Activated CD4-positive, alpha-beta memory T cell treated with anti-CD3 and anti-CD28 coated beads, Interleukin-2, amount 10 ng/mL, durations not matched to agents 7 days and 5 days (primary cell): ENCODE measurements at regions of chr13 and their contacts with region 1.

Region 1: DNA sequence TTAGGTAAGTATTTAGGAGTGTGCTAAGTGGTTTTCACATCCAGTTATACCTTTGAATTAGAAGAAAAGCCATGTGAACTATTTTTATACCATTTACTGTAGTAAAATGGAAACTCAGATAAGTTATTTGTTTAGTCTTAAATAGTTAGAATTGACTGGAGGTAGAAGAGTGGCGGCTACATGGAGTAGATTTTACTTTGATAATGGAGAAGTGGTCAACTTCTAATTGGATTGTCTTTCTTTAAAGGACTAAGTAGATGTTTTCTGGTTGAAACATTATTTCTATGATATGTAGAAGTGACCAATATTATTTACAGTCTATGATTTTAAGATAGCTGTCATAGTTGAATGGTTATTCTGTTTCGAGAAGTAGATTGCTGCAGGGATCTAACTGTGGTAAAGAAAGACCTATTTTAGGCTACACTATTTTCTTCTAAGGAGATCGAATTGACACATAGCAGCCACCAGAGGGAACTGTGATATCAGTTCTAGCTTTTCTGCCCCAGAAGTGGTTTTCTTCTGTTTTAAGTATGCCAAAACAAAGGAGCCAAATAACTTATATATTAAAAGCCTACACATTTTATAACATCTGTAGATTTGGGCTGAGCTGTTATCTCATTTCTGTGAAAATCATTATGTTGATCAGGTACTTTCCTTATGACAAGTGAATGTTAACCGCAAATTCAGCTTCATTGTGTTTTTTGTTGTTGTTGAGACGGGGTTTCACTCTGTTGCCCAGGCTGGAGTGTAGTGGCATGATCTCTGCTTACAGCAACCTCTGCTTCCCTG is 26.1 kb downstream of the ZMYM2 start:
- DNase-seq: peak; percentile 18
- H3K4me3 Mint-ChIP-seq: no peak overlapping the region
- H3K27ac Mint-ChIP-seq: peak overlapping the region; percentile 66
- H3K4me1 Mint-ChIP-seq: peaks cover 35% of the 10 kb centered on the region
- H3K27me3 Mint-ChIP-seq: no peaks in the 10 kb centered on the region

Region 2: DNA sequence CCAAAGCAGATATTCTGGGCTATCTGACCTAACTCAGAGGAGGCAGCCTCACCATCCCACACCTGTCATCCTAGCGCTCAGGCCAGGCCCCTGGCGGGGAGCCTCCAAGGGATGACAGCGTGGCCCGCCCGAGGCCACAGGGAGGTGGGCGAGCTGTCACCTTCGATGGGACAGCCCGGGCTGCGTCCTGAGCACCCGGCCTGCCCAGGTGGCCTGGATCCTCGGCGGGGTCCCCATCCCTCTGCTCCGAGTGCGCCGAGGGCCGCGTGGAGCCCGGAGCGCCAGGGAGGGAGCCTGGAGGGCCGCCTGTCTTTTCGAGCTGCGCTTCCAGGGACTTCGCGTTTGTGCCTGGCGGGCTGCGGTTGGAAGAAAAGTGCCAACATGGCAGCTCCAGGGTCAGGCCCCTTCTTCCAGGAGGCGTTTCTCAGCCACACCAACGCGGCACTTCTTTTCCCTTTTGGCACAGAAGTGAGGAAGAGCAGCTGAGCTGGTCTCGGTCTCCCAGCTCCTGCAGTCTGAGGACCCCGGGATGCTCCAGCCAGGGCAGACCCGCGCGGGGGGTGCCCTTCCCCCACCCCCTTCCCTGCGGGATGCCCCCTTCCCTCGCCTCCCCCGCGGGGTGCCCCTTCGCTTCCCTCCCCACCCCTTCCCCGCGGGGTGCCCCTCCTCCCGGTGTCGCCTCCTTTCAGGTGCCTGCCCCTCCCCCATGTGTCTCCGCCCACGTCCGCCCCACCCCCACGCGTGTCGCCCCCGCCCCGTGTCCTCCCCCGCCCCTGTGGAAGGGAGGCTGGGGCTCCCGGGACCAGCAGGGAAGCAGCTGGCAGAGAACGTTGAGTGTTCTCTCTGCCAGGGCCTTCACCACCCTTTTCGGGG is 133.9 kb after region 1 on chr13:
- CTCF ChIA-PET with region 1: interaction called, 16 read pairs
- POLR2A ChIA-PET with region 1: interaction called, 5 read pairs
- DNase-seq: peak; percentile 44
- H3K4me3 Mint-ChIP-seq: peak overlapping the region; percentile 80
- H3K27ac Mint-ChIP-seq: peak overlapping the region; percentile 68
- H3K4me1 Mint-ChIP-seq: peaks cover 20% of the 10 kb centered on the region
- H3K27me3 Mint-ChIP-seq: peaks cover 6% of the 10 kb centered on the region

Region 3: DNA sequence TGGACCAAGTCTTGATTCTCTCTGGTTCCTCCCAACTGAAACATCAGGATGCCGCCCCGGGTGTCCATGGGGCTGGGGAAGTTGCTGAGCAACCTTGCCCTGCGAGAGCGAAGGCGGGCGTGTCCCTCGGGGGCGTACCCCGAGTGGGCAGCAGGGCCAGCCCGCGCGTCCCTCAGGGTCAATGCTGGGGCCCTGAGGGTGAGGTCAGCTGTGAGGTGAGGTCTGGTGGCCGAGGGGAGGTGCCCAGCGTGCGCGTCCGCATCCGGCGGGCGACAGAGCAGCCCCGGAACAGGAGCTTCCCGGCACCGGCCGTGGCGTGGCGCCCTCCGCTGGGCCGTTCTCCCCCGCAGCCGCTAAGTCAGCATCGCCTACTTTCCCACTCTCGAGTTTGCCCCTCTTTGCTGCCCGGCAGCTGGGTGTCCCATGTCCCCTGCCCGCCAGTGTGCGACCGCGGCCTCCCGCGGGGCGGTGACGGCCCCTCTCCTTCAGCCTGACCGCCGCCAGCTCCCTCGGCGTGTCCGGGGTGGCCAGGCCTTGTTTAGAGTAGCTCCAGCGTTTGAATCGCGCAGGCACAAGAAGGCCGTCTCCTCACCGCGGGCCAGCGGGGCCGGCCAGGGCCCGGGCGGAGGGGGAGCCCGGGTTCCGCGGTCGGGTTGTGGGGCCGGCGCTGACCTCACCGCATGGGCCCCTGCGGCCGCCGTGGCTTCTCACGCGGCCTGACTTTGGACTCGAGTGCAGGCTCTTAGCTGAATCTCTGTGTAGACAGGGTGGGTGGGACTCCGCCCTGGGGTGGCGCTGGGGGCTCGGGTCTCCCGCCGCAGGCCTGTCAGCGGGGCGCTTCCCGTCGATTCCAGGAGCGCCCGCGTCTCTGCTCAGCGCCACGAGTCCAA is 143.2 kb after region 1 on chr13:
- CTCF ChIA-PET with region 1: interaction called, 10 read pairs
- POLR2A ChIA-PET with region 1: interaction called, 7 read pairs
- DNase-seq: peak; percentile 57
- H3K4me3 Mint-ChIP-seq: peak overlapping the region; percentile 63
- H3K27ac Mint-ChIP-seq: no peak overlapping the region
- H3K4me1 Mint-ChIP-seq: peaks cover 8% of the 10 kb centered on the region
- H3K27me3 Mint-ChIP-seq: peaks cover 43% of the 10 kb centered on the region

Region 4: DNA sequence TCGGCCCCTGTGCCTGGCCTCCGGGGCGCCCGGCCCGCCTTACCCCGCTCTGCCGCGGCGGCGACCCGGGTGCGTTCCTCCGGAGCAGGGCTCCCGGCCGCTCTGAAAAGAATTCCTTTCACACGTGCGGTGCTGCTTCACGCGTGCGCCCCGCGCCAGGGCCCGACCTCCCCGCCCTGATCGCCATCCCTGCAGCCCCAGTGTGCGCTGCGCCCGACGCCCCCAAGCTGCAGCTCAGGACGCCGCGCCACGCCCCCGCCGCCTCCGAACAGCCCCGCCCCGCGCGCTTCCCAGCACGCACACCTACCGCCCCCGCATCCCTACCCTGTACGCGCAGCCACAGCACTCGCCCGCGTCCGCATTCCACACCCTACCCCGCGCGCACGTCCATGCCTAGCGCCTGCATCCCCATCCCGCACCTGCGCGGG is 176.2 kb after region 1 on chr13 and contains the start of gene GJA3:
- CTCF ChIA-PET with region 1: interaction called, 46 read pairs
- POLR2A ChIA-PET with region 1: interaction called, 6 read pairs
- DNase-seq: peak; percentile 48
- H3K4me3 Mint-ChIP-seq: peak within 1 kb of the TSS; percentile 73
- H3K27ac Mint-ChIP-seq: no peak within 1 kb of the TSS
- H3K4me1 Mint-ChIP-seq: peaks cover 24% of the 10 kb centered on the region
- H3K27me3 Mint-ChIP-seq: peaks cover 60% of the 10 kb centered on the region
- total RNA-seq, gene GJA3: 0.13 to 0.23 TPM